OCI-LY7 (cell line): ENCODE measurements at regions of chr1 and their contacts with region 1.

Region 1: DNA sequence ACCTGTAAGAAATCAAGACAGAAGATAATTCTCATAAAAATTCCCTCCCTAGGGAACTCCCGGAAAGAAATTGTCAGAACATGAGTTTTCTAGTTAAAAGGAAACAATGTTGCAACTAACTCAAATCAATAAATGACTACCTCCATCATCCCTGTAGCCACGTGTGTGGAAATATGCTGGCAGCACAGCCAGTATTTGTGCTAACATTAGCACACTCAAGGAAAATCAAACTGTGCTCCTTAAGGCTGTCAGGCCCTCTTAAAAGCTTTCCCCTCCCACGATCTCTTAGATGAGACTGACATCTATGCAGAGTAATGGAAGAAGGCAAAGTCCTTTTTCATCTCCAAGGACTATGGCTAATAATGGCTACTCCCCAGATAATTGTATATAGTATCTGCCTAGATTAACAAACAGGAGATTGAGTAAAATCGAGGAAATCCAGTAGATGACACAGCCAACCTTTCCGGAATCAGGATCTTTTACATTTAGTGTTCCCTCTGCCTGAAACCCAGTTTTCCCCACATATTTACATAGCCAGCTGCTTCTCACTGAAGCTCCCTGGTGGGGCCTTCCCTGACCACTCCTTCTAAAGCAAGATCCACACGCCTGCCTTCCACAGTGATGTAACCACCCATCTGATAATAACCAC is 50.9 kb upstream of the NR5A2 start:
- DNase-seq: peak; percentile 18
- H3K4me3 ChIP-seq: peak overlapping the region; percentile 31
- H3K27ac ChIP-seq: peak overlapping the region; percentile 98
- H3K4me1 ChIP-seq: peaks cover 60% of the 10 kb centered on the region
- CTCF ChIP-seq: no peak

Region 2: DNA sequence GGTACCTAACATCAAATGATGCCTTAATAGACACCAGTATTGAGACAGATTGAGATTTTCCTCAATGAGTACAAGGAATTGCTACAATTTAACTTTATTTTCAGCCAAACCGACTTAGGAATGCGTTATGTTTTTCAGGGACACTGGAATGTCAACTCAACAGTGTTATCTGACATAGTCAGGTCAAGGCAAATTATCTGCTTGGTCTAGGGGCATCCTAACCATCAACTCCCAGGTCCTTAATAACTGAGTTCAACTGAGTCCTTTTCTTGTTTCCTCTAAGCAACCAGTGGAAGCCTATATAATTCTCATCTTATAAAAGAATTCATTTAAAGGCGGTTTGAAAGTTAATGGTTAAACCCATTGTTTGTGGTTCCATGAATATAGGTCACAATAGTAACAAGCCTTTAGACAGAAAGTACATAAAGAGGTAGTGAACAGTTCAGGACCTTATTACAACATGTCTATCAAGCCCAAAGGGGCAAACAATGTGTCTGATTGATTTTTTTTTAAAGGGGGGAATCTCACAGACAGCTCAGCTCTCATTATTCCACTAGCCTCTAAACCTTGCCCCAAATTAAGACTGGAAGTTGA is 18.6 kb after region 1 on chr1:
- CTCF ChIA-PET with region 1: no interaction called
- POLR2A ChIA-PET with region 1: interaction called, 17 read pairs
- intact Hi-C with region 1: no loop called
- DNase-seq: no peak
- H3K4me3 ChIP-seq: no peak overlapping the region
- H3K27ac ChIP-seq: no peak overlapping the region
- H3K4me1 ChIP-seq: no peaks in the 10 kb centered on the region
- CTCF ChIP-seq: no peak

Region 3: DNA sequence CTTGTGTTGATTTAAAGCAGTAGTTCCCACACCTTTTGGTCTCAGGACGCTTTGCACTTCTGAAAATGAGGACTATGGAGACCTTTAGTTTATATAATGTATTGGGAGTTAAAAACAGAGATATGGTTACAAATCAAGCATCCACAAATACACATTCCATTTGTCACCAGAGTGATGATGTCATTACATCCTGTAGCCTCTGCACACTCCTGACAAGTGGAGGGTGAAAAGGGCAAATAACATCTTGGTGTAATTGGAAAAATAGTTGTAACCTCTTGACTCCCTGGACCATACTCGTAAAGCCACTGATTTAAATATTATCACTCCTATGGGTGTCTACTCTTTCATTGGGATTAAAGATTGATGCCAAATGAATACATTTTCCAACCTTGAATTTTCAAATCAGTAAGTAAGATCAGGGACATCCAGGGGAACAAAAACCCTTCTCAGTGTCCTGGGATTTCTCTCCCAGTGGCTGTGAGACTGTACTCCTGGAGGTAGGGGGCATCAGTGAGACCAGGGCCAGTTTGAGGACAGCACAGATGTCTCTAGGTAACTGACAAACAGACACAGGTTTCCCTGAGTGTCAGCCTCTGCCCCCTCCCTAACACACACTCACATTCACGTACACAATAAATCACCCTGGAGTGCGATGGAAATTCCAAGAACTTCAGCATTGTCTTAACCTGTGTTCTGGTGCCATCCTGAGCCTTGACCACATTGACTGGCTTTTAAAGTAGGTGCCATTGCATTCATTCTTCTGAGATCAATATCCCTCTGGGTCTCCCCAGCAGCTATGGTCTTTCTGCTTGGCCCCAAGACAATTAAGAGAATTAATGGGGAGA is 113.9 kb after region 1 on chr1:
- CTCF ChIA-PET with region 1: no interaction called
- POLR2A ChIA-PET with region 1: no interaction called
- intact Hi-C with region 1: no loop called
- DNase-seq: peak; percentile 16
- H3K4me3 ChIP-seq: no peak overlapping the region
- H3K27ac ChIP-seq: no peak overlapping the region
- H3K4me1 ChIP-seq: no peaks in the 10 kb centered on the region
- CTCF ChIP-seq: peak; percentile 63

Region 4: GRCh38 chr1:200154069-200154767 is 177.6 kb after region 1 on chr1:
- CTCF ChIA-PET with region 1: no interaction called
- POLR2A ChIA-PET with region 1: interaction called, 5 read pairs
- intact Hi-C with region 1: loop called (anchors 5 kb)
- DNase-seq: peak; percentile 93
- H3K4me3 ChIP-seq: peak overlapping the region; percentile 41
- H3K27ac ChIP-seq: peak overlapping the region; percentile 89
- H3K4me1 ChIP-seq: peaks cover 56% of the 10 kb centered on the region
- CTCF ChIP-seq: no peak

Region 5: GRCh38 chr1:200409761-200410565 is 433.3 kb after region 1 on chr1 and contains the start of gene ZNF281:
- CTCF ChIA-PET with region 1: no interaction called
- POLR2A ChIA-PET with region 1: no interaction called
- intact Hi-C with region 1: loop called (anchors 10 kb)
- DNase-seq: peak; percentile 96
- H3K4me3 ChIP-seq: peak within 1 kb of the TSS; percentile 97
- H3K27ac ChIP-seq: peak within 1 kb of the TSS; percentile 79
- H3K4me1 ChIP-seq: peaks cover 50% of the 10 kb centered on the region
- CTCF ChIP-seq: no peak
- total RNA-seq, gene ZNF281: 22.9 and 24.2 TPM in 2 replicates